Caco-2 (cell line): ENCODE measurements at regions of chr11 and their contacts with region 1.

Region 1: GRCh38 chr11:33161120-33162005 is at the start of gene CSTF3:
- DNase-seq: peak; percentile 100
- H3K4me3 ChIP-seq: peak within 1 kb of the TSS; percentile 79
- H3K4me3 Mint-ChIP-seq: peak within 1 kb of the TSS; percentile 100
- H3K27ac Mint-ChIP-seq: peak within 1 kb of the TSS; percentile 100
- H3K4me1 ChIP-seq: peaks cover 22% of the 10 kb centered on the region
- H3K4me1 Mint-ChIP-seq: peaks cover 11% of the 10 kb centered on the region
- H3K27me3 ChIP-seq: no peaks in the 10 kb centered on the region
- H3K27me3 Mint-ChIP-seq: no peaks in the 10 kb centered on the region
- CTCF ChIP-seq: peak; percentile 46 to 49
- total RNA-seq, gene CSTF3: 43.6 and 45.6 TPM in 2 replicates

Region 2: DNA sequence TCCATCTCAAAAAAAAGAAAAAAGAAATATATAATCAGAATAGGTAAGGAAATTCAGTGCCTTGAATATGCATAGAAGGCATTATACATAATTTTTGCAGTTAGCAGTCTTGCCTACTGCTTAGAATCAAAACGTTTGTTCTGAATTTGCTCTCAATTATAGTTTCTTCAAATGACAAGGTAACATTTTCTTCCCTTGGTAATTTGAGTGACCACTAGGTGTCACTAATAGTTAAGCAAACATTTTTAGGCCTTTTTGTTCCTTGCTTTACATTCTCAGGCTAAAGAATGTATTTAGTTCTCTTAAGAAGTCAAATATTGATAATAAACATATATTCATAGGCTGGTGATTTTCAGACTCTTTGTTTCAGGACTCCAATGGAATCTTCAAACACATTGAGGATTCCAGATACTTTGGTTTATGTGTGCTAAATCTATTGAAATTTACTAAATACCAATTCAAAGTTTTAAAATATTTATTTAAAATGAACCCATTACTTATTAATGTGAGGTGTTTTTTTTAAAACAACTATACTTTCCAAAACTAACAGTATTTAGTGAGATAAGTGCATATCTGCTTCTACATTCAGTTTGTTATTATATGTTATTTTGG is 200.7 kb before region 1 on chr11:
- CTCF ChIA-PET with region 1: no interaction called
- POLR2A ChIA-PET with region 1: no interaction called
- intact Hi-C with region 1: loop called (anchors 1 kb)
- DNase-seq: peak in 1 of 2 experiments; percentile 40
- H3K4me3 ChIP-seq: no peak overlapping the region
- H3K4me3 Mint-ChIP-seq: no peak overlapping the region
- H3K27ac Mint-ChIP-seq: no peak overlapping the region
- H3K4me1 ChIP-seq: no peaks in the 10 kb centered on the region
- H3K4me1 Mint-ChIP-seq: no peaks in the 10 kb centered on the region
- H3K27me3 ChIP-seq: no peaks in the 10 kb centered on the region
- H3K27me3 Mint-ChIP-seq: no peaks in the 10 kb centered on the region
- CTCF ChIP-seq: peak; percentile 58 to 60

Region 3: DNA sequence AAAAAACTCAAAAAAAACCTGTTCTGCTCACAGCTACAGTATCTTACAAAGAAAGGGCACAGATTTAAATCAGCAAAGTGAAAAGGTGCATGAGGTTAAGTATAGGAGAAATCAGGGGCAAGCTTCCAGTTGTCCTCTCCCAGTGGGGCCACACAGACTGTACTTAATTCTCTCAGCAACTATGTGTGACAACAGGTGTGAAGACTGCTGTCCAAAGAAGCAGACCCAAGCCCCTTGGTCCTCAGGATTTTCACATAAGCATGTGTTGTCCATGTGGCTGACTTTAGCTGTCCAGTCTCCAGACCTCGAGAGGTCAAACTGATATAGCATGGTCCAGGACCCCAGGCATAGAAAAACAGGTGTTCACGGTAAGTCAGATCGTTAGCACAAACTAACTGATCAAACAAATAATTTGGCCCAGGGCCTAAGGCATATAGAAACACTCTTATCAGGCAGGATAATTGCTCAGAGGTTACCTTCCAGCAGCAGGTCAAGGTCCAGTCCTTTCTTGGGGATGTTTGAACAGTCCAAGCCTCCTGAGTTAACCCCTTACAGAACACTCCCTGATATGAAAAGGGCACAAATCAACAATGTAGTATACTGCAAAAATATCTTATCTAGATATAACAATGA is 21.0 kb after region 1 on chr11:
- CTCF ChIA-PET with region 1: interaction called, 3 read pairs
- POLR2A ChIA-PET with region 1: interaction called, 5 read pairs
- intact Hi-C with region 1: loop called (anchors 1 kb)
- DNase-seq: peak; percentile 86 to 92
- H3K4me3 ChIP-seq: no peak overlapping the region
- H3K4me3 Mint-ChIP-seq: peak overlapping the region; percentile 38
- H3K27ac Mint-ChIP-seq: peak overlapping the region; percentile 94
- H3K4me1 ChIP-seq: peaks cover 59% of the 10 kb centered on the region
- H3K4me1 Mint-ChIP-seq: peaks cover 39% of the 10 kb centered on the region
- H3K27me3 ChIP-seq: no peaks in the 10 kb centered on the region
- H3K27me3 Mint-ChIP-seq: no peaks in the 10 kb centered on the region
- CTCF ChIP-seq: no peak

Region 4: GRCh38 chr11:33234397-33235190 is 73.2 kb after region 1 on chr11:
- CTCF ChIA-PET with region 1: no interaction called
- POLR2A ChIA-PET with region 1: no interaction called
- intact Hi-C with region 1: loop called (anchors 5 kb)
- DNase-seq: no peak
- H3K4me3 ChIP-seq: no peak overlapping the region
- H3K4me3 Mint-ChIP-seq: no peak overlapping the region
- H3K27ac Mint-ChIP-seq: no peak overlapping the region
- H3K4me1 ChIP-seq: peaks cover 13% of the 10 kb centered on the region
- H3K4me1 Mint-ChIP-seq: no peaks in the 10 kb centered on the region
- H3K27me3 ChIP-seq: no peaks in the 10 kb centered on the region
- H3K27me3 Mint-ChIP-seq: no peaks in the 10 kb centered on the region
- CTCF ChIP-seq: no peak

Region 5: GRCh38 chr11:33324302-33324985 is 163.1 kb after region 1 on chr11:
- CTCF ChIA-PET with region 1: interaction called, 7 read pairs
- POLR2A ChIA-PET with region 1: no interaction called
- intact Hi-C with region 1: loop called (anchors 1 kb)
- DNase-seq: peak in 1 of 2 experiments; percentile 51
- H3K4me3 ChIP-seq: no peak overlapping the region
- H3K4me3 Mint-ChIP-seq: peak overlapping the region; percentile 20
- H3K27ac Mint-ChIP-seq: no peak overlapping the region
- H3K4me1 ChIP-seq: peaks cover 35% of the 10 kb centered on the region
- H3K4me1 Mint-ChIP-seq: peaks cover 14% of the 10 kb centered on the region
- H3K27me3 ChIP-seq: no peaks in the 10 kb centered on the region
- H3K27me3 Mint-ChIP-seq: no peaks in the 10 kb centered on the region
- CTCF ChIP-seq: no peak